ENCODE measurements at regions of chr2 and their contacts with region 1.

Region 1: GRCh38 chr2:106363791-106364190 is 104.4 kb downstream of the RGPD3 start:
- DNase-seq: no peak
- H3K4me3 ChIP-seq: no peak overlapping the region
- CTCF ChIP-seq: no peak

Region 2: DNA sequence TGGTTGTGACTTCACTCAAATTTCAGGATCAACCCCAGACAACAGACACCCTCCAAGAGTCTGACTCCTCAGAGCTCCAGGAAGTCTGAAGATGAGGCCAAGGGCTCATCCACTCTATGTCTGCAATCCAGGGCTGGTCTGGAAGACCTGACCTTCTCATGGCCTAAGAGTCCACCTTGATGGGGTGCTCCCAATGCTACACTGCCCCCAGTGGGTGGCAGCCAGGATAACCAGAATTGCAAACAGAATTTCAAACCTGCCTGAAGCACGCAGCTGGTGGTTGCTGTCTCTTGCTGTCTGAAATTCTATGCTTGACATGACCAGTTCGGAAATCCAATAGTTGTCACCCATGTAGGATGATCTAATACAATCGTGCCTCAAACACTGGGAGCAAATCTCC is 265.7 kb before region 1 on chr2:
- in situ Hi-C with region 1: loop called (anchors 10 kb)
- DNase-seq: no peak
- H3K4me3 ChIP-seq: no peak overlapping the region
- CTCF ChIP-seq: peak; percentile 58

Measured in astrocyte of the cerebellum (primary cell).